Activated CD4-positive, alpha-beta T cell treated with anti-CD3 and anti-CD28 coated beads for 36 hours (primary cell): ENCODE measurements at regions of chr3 and their contacts with region 1.

Region 1: DNA sequence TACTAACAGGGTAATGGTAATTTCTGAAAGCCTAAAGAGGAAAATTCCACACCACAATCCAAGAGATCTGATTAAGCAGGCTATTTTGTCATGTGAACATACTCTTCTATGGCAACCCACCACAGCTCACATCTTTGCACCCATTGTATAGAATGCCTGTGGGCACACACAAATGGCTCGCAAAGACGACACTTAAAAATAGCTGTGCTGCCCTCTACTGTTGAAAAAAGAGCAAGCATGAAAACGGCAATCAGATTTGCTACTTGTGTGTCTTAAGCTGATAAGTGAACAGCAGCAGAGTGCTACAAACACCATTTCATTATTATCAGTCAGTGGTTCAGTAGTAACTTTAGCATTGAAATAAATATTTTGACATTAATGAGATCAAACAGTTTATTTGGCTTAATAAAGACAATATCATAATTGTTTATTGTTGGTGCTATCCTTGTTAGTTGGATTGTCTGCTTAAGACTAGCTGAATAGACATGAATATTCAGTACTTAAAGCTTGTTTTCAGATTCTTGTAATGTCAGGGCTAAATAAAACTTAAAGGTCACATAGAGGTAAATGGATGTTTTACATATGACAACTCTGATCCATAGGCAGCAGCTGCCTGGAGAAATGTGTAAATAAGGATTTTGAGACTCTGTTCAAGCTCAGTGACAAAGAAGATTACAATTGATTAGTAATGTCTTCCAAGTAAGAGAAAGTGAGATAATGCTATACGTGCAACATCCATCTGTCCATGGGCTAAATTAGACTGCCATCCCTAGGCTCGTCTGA is 199.1 kb downstream of the LRRN1 start:
- DNase-seq: peak; percentile 39
- ATAC-seq: peak; percentile 23
- H3K4me3 Mint-ChIP-seq: no peak overlapping the region
- H3K27ac Mint-ChIP-seq: no peak overlapping the region
- H3K4me1 Mint-ChIP-seq: no peaks in the 10 kb centered on the region
- H3K27me3 Mint-ChIP-seq: peaks cover 1% of the 10 kb centered on the region

Region 2: DNA sequence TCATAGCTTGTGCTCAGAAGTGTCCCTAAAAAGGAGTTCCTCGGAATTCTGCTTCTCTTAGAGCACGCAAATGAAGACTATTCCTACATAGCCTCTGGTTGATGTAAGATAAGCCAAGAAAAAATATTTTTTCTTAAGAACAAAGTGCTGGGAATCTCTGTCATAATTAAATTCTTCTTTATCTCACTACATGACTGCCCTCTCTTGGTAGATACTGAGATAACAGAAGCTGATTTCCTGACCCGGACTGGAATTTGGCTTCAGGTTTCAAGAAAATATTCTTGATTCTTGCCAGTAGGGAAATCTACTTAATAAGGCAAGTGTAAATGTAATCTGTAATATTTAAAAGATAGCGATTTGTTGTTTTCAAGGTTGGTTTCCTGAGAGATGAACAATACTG is 273.5 kb after region 1 on chr3:
- CTCF ChIA-PET with region 1: interaction called, 3 read pairs
- POLR2A ChIA-PET with region 1: no interaction called
- intact Hi-C with region 1: loop called in 1 of 2 experiments (anchors 10 kb)
- DNase-seq: no peak
- ATAC-seq: no peak
- H3K4me3 Mint-ChIP-seq: no peak overlapping the region
- H3K27ac Mint-ChIP-seq: no peak overlapping the region
- H3K4me1 Mint-ChIP-seq: peaks cover 8% of the 10 kb centered on the region
- H3K27me3 Mint-ChIP-seq: no peaks in the 10 kb centered on the region

Region 3: GRCh38 chr3:4290272-4290893 is 292.1 kb after region 1 on chr3:
- CTCF ChIA-PET with region 1: interaction called, 5 read pairs
- POLR2A ChIA-PET with region 1: no interaction called
- intact Hi-C with region 1: loop called in 1 of 2 experiments (anchors 2 kb)
- DNase-seq: peak; percentile 52
- ATAC-seq: no peak
- H3K4me3 Mint-ChIP-seq: no peak overlapping the region
- H3K27ac Mint-ChIP-seq: no peak overlapping the region
- H3K4me1 Mint-ChIP-seq: peaks cover 14% of the 10 kb centered on the region
- H3K27me3 Mint-ChIP-seq: no peaks in the 10 kb centered on the region